ENCODE measurements at regions of chr19 and their contacts with region 1.

Region 1: DNA sequence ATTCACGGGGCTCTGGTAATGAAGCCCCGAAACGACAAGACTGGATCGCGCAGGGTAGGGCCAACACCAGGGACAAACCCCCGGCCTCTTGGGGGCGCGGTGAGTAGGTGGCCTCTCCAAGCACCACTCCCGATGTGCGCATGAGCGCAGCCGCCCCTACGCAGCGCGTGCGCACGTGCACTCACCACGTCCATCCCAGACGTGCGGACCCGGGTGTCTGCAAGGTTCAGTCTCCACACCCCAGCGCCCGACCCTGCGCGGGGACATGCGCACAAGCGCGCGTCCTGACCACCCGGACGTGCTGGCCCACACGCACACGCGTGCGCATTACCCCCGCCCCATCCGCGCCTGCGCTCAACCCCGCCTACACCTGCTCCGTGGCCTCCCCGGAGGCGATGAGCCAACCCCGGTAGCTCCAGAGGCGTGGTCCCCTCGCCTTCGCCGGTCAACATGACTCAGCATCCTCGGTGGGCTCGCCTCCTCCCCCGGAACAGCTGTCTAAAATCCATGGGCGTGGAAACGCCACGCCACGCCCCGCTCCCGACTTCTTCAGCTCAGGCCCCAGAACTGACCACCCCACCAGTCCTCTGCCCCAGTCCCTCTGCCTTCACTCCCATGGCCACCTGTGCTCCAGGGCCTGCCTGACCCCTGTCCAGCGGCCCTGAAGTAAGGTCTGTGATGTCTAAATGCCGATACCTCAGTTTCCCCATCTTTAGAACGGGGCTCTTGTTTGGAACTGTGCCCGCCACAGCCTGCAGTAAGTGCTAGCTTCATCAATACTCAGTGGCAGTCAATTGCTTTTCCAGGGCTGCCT is 5.6 kb upstream of the GPI start:
- DNase-seq: peak; percentile 100
- ATAC-seq: peak; percentile 93
- H3K4me3 Mint-ChIP-seq: peak overlapping the region; percentile 77
- H3K27ac Mint-ChIP-seq: peak overlapping the region; percentile 89
- H3K4me1 Mint-ChIP-seq: peaks cover 43% of the 10 kb centered on the region
- H3K27me3 Mint-ChIP-seq: no peaks in the 10 kb centered on the region

Region 2: GRCh38 chr19:33795370-33796163 is 563.8 kb before region 1 on chr19:
- CTCF ChIA-PET with region 1: no interaction called
- POLR2A ChIA-PET with region 1: no interaction called
- intact Hi-C with region 1: loop called in 1 of 2 experiments (anchors 10 kb)
- DNase-seq: peak; percentile 77
- ATAC-seq: peak; percentile 59
- H3K4me3 Mint-ChIP-seq: peak overlapping the region; percentile 72
- H3K27ac Mint-ChIP-seq: no peak overlapping the region
- H3K4me1 Mint-ChIP-seq: peaks cover 2% of the 10 kb centered on the region
- H3K27me3 Mint-ChIP-seq: peaks cover 24% of the 10 kb centered on the region

Region 3: DNA sequence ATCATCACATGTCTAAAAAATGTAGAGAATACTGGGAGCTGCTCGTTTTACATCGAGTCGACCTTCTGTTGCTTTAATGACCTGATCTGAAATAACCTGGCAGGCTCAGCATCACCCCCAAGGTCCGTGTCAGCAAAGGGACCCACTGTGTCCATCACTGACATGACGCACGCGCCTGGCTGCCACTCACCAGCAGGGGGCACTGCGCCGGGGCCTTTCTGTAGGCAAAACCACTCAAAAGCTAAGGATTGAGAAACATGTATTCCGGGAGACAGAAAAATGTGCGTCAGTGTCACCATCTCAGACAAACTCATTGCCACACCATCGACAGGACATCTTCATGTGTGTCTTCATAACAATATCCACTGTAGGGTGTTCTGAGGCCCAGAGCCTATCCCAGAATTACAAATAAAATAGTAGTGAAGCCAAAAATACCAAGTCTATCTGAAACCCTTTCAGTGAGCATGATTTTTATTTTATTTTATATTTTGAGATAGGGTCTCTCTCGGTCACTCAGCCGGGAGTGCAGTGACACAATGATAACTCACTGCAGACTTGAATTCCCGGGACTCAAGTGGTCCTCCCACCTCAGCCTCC is 317.3 kb before region 1 on chr19:
- CTCF ChIA-PET with region 1: no interaction called
- POLR2A ChIA-PET with region 1: no interaction called
- intact Hi-C with region 1: loop called in 1 of 2 experiments (anchors 10 kb)
- DNase-seq: peak; percentile 91
- ATAC-seq: peak; percentile 71
- H3K4me3 Mint-ChIP-seq: no peak overlapping the region
- H3K27ac Mint-ChIP-seq: no peak overlapping the region
- H3K4me1 Mint-ChIP-seq: peaks cover 3% of the 10 kb centered on the region
- H3K27me3 Mint-ChIP-seq: peaks cover 10% of the 10 kb centered on the region

Region 4: GRCh38 chr19:34134190-34135053 is 224.9 kb before region 1 on chr19:
- CTCF ChIA-PET with region 1: no interaction called
- POLR2A ChIA-PET with region 1: no interaction called
- intact Hi-C with region 1: loop called in 1 of 2 experiments (anchors 1 kb)
- DNase-seq: peak; percentile 94
- ATAC-seq: peak; percentile 94
- H3K4me3 Mint-ChIP-seq: peak overlapping the region; percentile 92
- H3K27ac Mint-ChIP-seq: peak overlapping the region; percentile 95
- H3K4me1 Mint-ChIP-seq: peaks cover 9% of the 10 kb centered on the region
- H3K27me3 Mint-ChIP-seq: no peaks in the 10 kb centered on the region

Region 5: GRCh38 chr19:34288381-34288780 is 71.0 kb before region 1 on chr19:
- CTCF ChIA-PET with region 1: no interaction called
- POLR2A ChIA-PET with region 1: no interaction called
- intact Hi-C with region 1: no loop called
- DNase-seq: peak; percentile 56
- ATAC-seq: peak; percentile 80
- H3K4me3 Mint-ChIP-seq: no peak overlapping the region
- H3K27ac Mint-ChIP-seq: peak overlapping the region; percentile 71
- H3K4me1 Mint-ChIP-seq: peaks cover 24% of the 10 kb centered on the region
- H3K27me3 Mint-ChIP-seq: no peaks in the 10 kb centered on the region

Region 6: DNA sequence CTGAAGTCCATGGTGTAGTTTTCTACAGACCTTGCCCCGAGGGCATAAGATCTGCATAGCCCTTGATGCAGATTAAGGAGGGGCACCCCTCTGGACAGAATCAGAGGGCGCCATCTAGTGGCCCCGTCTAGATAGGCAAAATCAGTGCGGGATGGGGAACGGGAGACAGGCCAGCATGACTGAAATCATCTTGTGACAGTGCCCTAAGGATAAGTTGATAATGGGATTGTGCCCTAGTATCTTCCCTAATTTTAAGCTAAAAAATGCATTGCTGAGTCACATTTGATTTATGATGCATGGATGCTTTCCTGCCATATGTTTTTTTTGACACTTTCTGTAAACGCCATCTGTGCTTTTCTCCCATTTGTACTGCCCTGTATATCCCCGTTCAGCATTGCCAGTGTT is 13.4 kb before region 1 on chr19:
- CTCF ChIA-PET with region 1: interaction called, 29 read pairs
- POLR2A ChIA-PET with region 1: no interaction called
- intact Hi-C with region 1: no loop called
- DNase-seq: peak; percentile 85
- ATAC-seq: peak; percentile 24
- H3K4me3 Mint-ChIP-seq: no peak overlapping the region
- H3K27ac Mint-ChIP-seq: peak overlapping the region; percentile 70
- H3K4me1 Mint-ChIP-seq: peaks cover 19% of the 10 kb centered on the region
- H3K27me3 Mint-ChIP-seq: no peaks in the 10 kb centered on the region

Region 7: GRCh38 chr19:34404109-34404897 is 45.0 kb after region 1 on chr19 and contains the start of gene PDCD2L:
- CTCF ChIA-PET with region 1: no interaction called
- POLR2A ChIA-PET with region 1: no interaction called
- intact Hi-C with region 1: loop called in 1 of 2 experiments (anchors 1 kb)
- DNase-seq: peak; percentile 97
- ATAC-seq: peak; percentile 95
- H3K4me3 Mint-ChIP-seq: peak within 1 kb of the TSS; percentile 83
- H3K27ac Mint-ChIP-seq: peak within 1 kb of the TSS; percentile 80
- H3K4me1 Mint-ChIP-seq: peaks cover 23% of the 10 kb centered on the region
- H3K27me3 Mint-ChIP-seq: no peaks in the 10 kb centered on the region
- total RNA-seq, gene PDCD2L: 31.0 to 35.2 TPM